ENCODE measurements at regions of chr9 and their contacts with region 1.

Region 1: DNA sequence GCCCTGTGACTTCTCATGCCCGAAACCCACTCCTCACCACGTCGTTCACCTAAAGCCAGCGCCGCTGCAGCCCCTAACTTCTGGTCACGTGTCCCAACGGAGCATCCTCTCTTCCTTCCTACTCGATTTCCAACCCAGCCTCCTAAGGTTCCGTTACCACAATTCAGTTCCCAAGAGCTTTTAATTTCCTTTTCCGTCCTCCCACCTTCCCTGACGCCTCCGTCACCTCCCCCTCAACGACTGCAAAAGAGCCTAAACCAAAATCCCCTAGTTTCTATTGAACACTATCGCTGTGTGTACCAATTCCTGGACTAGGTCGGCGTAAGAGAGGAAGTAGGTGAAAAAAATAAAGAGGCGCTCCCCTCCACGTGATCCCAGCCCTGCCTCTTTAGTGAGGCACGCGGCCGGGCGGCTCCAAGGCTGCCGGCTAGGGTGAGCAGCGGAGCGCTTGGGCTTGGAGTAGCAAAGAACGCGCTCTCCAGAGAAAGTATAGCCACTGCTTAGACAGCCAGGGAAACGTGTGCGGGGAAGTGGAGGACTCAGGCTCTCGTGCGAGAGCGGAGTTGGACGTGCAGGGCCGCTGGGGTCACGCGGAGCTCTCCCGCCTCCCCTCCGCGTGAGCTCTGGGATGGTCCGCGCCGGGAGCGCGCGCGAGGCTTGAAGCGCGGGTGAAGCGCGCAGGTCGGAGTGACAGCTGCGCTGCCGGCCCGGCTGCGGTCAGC is at the starts of genes CENPP and NOL8:
- DNase-seq: peak; percentile 88
- ATAC-seq: peak; percentile 88
- H3K4me3 ChIP-seq: peak within 1 kb of the TSS; percentile 86 to 88
- H3K27ac ChIP-seq: peak within 1 kb of the TSS; percentile 87
- H3K4me1 ChIP-seq: peaks cover 9 to 17% of the 10 kb centered on the region in 2 experiments; a peak in 3 of 4 replicates
- H3K27me3 ChIP-seq: no peaks in the 10 kb centered on the region
- CTCF ChIP-seq: no peak
- POLR2A ChIP-seq: peak; percentile 63
- RAD21 ChIP-seq: no peak
- total RNA-seq, gene CENPP: 7.0 TPM
- total RNA-seq, gene NOL8: 48.2 TPM

Region 2: GRCh38 chr9:92438900-92439526 is 113.6 kb after region 1 on chr9:
- CTCF ChIA-PET with region 1: interaction called, 19 read pairs
- POLR2A ChIA-PET with region 1: interaction called, 4 read pairs
- RAD21 ChIA-PET with region 1: interaction called in 1 of 2 experiments, 3 read pairs
- intact Hi-C with region 1: loop called (anchors 2 kb)
- DNase-seq: peak; percentile 3
- ATAC-seq: no peak
- H3K4me3 ChIP-seq: no peak overlapping the region
- H3K27ac ChIP-seq: no peak overlapping the region
- H3K4me1 ChIP-seq: no peaks in the 10 kb centered on the region
- H3K27me3 ChIP-seq: no peaks in the 10 kb centered on the region
- CTCF ChIP-seq: peak in 1 of 3 experiments; percentile 62; a peak in 2 of 6 replicates
- POLR2A ChIP-seq: no peak
- RAD21 ChIP-seq: peak; percentile 59

Region 3: GRCh38 chr9:92634712-92635605 is 309.5 kb after region 1 on chr9:
- CTCF ChIA-PET with region 1: interaction called, 3 read pairs
- POLR2A ChIA-PET with region 1: no interaction called
- RAD21 ChIA-PET with region 1: no interaction called
- intact Hi-C with region 1: loop called (anchors 1 kb)
- DNase-seq: peak; percentile 41
- ATAC-seq: peak; percentile 96
- H3K4me3 ChIP-seq: no peak overlapping the region
- H3K27ac ChIP-seq: no peak overlapping the region
- H3K4me1 ChIP-seq: no peaks in the 10 kb centered on the region
- H3K27me3 ChIP-seq: no peaks in the 10 kb centered on the region
- CTCF ChIP-seq: peak; percentile 96 to 97 (median 97)
- POLR2A ChIP-seq: no peak
- RAD21 ChIP-seq: peak; percentile 91

Region 4: DNA sequence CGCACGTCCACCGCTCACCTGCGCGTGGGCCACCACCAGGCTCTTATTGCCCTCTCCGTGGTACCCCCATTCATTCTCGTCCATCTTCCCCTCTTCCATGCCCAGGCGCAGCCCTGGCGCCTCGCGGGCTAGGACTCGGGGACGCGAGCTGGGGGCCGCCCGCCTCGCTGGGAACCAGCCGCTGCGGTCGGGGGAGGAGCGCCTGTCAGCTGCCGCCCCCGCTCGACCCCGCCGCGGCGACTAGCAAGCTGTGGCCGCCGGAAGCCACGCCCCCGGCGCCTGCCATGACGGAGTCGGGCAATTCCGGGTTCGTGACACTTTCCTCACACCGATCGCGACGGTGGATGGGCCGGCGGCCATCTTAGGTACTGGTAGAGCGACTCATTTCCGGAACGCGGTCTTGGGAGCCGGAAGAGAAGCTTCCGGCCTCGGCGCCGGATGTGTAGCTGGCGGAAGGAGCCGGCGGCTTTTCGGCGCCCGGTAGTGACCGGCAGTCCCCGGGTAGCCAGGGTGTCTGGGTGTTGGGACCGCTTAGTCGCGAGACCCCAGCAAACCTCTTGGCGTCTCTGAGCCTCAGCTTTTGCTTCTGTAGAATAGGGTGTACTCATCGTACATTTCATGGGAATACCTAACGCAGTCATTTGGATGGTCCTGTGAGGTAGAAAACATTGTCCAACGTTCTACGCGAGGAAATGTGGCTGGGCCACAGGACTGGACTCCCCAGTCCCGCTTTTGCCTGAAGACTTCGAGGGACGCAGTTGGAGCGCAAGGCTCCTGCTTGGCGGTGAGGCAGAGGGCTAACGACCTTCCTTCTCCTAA is 344.7 kb after region 1 on chr9 and contains the start of gene IPPK:
- CTCF ChIA-PET with region 1: interaction called, 3 read pairs
- POLR2A ChIA-PET with region 1: no interaction called
- RAD21 ChIA-PET with region 1: no interaction called
- intact Hi-C with region 1: loop called (anchors 1 kb)
- DNase-seq: peak; percentile 98
- ATAC-seq: peak; percentile 84
- H3K4me3 ChIP-seq: peak within 1 kb of the TSS; percentile 72 to 90
- H3K27ac ChIP-seq: peak within 1 kb of the TSS; percentile 87
- H3K4me1 ChIP-seq: peaks cover 11 to 24% of the 10 kb centered on the region in 2 experiments; a peak in 3 of 4 replicates
- H3K27me3 ChIP-seq: no peaks in the 10 kb centered on the region
- CTCF ChIP-seq: no peak
- POLR2A ChIP-seq: peak; percentile 76
- RAD21 ChIP-seq: no peak
- total RNA-seq, gene IPPK: 15.4 TPM

Region 5: GRCh38 chr9:92790542-92791527 is 465.4 kb after region 1 on chr9:
- CTCF ChIA-PET with region 1: interaction called, 6 read pairs
- POLR2A ChIA-PET with region 1: no interaction called
- RAD21 ChIA-PET with region 1: no interaction called
- intact Hi-C with region 1: loop called (anchors 5 kb)
- DNase-seq: peak; percentile 65
- ATAC-seq: peak; percentile 99
- H3K4me3 ChIP-seq: no peak overlapping the region
- H3K27ac ChIP-seq: no peak overlapping the region
- H3K4me1 ChIP-seq: 0 out of 4 replicates have a peak, but pooled peaks cover 0 to 2% of the 10 kb centered on the region in 2 experiments
- H3K27me3 ChIP-seq: no peaks in the 10 kb centered on the region
- CTCF ChIP-seq: peak; percentile 79 to 94 (median 91)
- POLR2A ChIP-seq: no peak
- RAD21 ChIP-seq: peak; percentile 97